ENCODE measurements at regions of chr1 and their contacts with region 1.

Region 1: DNA sequence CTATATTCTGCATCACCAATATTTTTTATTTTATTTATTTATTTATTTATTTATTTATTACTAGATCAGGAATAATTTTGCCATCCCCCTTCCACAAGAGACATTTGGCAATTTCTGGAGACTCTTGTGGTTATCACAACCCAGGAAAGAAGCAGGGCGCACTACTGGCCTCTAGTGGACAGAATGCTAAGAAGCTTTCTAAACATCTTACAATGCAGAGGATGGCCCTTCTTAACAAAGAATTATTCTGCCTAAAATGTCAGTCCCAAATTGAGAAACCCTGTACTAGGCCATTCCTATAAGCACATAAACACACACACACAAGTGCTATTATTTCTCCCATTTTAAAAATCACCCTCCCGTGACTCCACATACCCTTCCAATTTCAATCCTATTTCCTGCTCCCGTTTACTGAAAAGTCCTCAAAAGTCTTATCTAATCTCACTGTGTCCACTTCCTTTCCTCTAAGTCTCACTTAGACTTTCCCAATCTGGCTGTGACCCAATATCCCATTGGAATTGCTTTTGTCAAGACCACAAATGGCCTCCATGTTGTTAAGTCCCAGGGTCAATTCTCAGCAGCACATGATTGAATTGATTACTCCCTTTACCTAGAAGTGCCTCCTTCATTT is 43.7 kb upstream of the RNF11 start:
- DNase-seq: peak; percentile 80
- H3K4me3 ChIP-seq: no peak overlapping the region
- H3K27ac ChIP-seq: no peak overlapping the region
- H3K4me1 ChIP-seq: no peaks in the 10 kb centered on the region
- H3K27me3 ChIP-seq: no peaks in the 10 kb centered on the region
- CTCF ChIP-seq: peak; percentile 83

Region 2: DNA sequence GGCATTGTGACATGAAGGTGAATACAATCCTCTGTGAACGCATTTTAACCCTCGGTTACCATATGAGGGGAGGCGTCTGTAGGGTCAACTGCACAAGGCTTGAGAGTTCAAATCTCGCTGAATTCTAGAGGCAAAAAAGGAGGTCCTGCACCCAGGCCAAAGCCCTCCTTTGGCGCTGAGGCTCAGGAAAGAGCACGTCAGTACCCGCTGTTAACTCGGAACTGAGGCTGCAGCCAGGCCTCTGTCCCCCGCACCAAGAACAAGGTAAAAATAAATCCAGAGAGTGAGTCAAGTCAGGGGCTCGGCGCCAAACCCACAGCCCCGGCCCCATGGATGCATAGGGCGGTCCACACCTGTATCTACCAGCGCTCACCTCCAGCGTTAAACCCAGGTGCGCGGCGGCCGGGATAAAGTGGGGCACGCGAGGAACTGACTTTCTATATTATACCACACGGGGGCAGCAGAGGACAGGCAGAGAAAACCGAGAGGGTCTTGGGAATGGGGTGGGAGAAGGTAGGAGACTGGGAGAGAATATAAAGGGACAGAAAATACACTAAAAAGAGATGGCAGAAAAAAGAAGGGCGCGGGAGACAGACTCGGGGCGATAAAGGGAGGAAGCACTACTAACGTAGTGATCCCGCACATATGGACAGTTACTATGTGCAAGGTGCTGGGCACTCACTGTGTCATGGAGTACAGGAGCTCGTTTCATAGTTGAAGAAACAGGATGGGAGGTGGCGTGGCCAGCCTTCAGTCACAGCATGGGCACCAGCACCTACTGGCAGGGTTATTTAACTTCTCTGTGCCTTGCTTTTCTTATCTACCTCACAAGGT is 823.9 kb before region 1 on chr1:
- CTCF ChIA-PET with region 1: interaction called, 4 read pairs
- POLR2A ChIA-PET with region 1: no interaction called
- intact Hi-C with region 1: loop called (anchors 2 kb)
- DNase-seq: peak; percentile 63
- H3K4me3 ChIP-seq: no peak overlapping the region
- H3K27ac ChIP-seq: no peak overlapping the region
- H3K4me1 ChIP-seq: no peaks in the 10 kb centered on the region
- H3K27me3 ChIP-seq: peaks cover 10% of the 10 kb centered on the region
- CTCF ChIP-seq: peak; percentile 87

Region 3: DNA sequence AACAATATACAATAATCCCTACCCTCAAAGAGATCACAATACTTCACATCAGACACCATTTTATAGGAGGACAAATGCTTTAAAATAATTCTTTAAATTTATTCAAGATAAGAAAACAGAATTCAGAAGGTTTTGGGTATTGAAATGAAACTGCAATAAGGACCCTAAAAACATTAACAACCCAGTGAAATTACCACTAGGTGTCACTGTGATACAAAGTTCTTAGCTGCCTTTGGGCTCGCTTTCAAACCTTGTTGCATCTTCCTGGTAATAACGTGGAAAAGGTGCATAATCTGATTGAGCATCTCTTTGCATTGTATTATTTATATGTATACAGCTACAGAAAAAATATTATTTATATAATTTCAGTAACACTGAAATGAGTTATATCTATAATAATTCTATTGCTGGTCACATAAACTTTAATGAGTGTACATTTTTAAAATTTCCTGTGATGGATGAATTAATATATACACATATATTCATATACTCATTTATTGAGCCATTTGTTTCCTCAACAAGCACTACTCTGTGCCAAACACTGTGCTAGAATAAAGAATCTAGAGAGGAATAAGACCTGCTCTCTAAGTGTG is 417.5 kb before region 1 on chr1:
- CTCF ChIA-PET with region 1: interaction called, 5 read pairs
- POLR2A ChIA-PET with region 1: no interaction called
- intact Hi-C with region 1: loop called (anchors 2 kb)
- DNase-seq: peak; percentile 74
- H3K4me3 ChIP-seq: no peak overlapping the region
- H3K27ac ChIP-seq: no peak overlapping the region
- H3K4me1 ChIP-seq: no peaks in the 10 kb centered on the region
- H3K27me3 ChIP-seq: no peaks in the 10 kb centered on the region
- CTCF ChIP-seq: peak; percentile 79

Region 4: GRCh38 chr1:50929376-50929958 is 262.9 kb before region 1 on chr1:
- CTCF ChIA-PET with region 1: no interaction called
- POLR2A ChIA-PET with region 1: no interaction called
- intact Hi-C with region 1: loop called (anchors 10 kb)
- DNase-seq: peak; percentile 63
- H3K4me3 ChIP-seq: no peak overlapping the region
- H3K27ac ChIP-seq: no peak overlapping the region
- H3K4me1 ChIP-seq: no peaks in the 10 kb centered on the region
- H3K27me3 ChIP-seq: no peaks in the 10 kb centered on the region
- CTCF ChIP-seq: peak; percentile 72

Region 5: GRCh38 chr1:50968158-50968820 is 224.0 kb before region 1 on chr1:
- CTCF ChIA-PET with region 1: no interaction called
- POLR2A ChIA-PET with region 1: no interaction called
- intact Hi-C with region 1: no loop called
- DNase-seq: peak; percentile 96
- H3K4me3 ChIP-seq: peak overlapping the region; percentile 92
- H3K27ac ChIP-seq: peak overlapping the region; percentile 97
- H3K4me1 ChIP-seq: peaks cover 19% of the 10 kb centered on the region
- H3K27me3 ChIP-seq: no peaks in the 10 kb centered on the region
- CTCF ChIP-seq: peak; percentile 50; the same call in 1 of the 2 replicates

Region 6: DNA sequence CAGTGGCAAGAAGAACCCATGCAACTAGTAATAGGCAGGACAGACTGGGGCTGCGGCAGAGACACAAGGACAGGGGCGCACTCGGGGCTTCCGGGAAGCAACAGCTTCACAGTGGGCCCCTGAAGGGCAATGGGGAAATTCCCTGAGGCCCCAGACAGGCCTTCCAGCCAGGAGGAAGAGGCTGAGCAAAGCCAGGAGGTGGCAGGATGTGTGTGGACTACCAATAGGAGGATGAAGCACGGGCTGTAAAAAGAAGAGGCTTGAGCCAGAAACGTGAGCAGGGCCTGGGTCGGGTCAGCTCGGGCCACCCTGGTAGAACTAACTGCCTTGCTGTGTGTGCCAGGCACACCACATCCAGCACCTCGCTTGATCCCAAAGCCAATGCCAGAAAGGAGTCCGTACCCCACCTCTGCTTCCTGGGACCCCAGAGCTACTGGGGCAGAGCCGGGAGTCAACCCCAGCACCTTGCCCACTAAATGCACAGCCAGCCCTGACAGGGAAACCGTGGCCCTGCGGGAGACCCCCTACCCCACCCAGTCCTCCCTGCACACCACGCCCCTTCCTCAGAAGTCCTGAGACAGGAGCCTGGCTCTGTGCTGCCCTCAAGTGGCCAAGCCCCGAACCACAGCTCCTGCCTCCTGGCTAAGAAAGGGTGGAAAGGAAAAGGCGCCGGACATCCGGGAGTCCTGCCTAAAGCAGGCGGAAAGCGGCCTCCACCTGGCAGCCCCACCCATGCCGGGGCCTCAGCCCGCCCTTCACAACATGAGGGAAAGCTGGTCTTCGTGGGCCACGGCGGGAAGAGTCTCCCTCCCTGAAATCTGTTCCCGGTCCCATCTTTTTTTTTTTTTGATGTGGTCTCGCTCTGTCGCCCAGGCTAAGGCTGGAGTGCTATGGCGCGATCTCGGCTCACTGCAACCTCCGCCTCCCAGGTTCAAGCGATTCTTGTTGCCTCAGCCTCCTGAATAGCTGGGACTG is 104.3 kb after region 1 on chr1:
- CTCF ChIA-PET with region 1: interaction called, 5 read pairs
- POLR2A ChIA-PET with region 1: interaction called, 5 read pairs
- intact Hi-C with region 1: loop called (anchors 2 kb)
- DNase-seq: peak; percentile 90
- H3K4me3 ChIP-seq: peak overlapping the region; percentile 30
- H3K27ac ChIP-seq: no peak overlapping the region
- H3K4me1 ChIP-seq: peaks cover 10% of the 10 kb centered on the region
- H3K27me3 ChIP-seq: no peaks in the 10 kb centered on the region
- CTCF ChIP-seq: peak; percentile 99

Measured in A673 (cell line).